ENCODE measurements at regions of chr6 and their contacts with region 1.

Region 1: DNA sequence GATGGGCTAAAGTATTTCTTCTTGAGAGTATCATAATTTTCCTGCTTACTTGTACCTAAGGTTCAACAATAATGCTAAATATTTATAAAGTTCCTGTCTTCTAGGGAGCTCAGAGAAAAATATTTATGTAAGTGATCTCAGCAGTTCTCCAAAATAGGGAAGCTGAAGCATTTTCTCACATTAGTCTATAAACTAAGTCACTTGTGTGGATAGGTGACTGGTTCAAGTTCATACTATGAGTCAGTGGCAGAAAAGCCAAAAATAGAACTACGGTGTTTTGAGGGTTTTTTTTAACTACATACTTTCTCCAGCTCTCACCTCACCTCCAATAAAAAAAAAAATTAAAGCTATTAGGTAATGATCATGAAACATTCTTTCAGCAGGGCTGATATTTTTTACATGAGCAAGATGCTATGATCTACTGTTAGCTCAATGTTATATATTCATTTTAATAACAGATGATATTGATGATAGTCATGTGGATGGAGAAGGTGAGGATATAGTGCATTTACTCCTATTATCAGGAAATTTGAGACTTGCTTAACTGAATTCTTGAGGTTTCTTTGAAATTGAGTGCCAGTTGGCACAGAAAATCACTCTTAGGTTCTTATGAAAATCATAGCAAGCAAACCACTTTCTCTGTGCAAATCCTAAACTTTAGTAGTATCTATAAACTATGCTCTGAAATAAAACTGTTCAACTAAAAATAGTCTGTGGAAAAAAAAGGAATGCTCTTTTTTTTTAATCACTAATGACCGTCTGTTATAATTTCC is 4.1 kb upstream of the MOXD1 start:
- DNase-seq: no peak
- ATAC-seq: no peak
- H3K4me3 Mint-ChIP-seq: no peak overlapping the region
- H3K27ac Mint-ChIP-seq: no peak overlapping the region
- H3K4me1 Mint-ChIP-seq: peaks cover 16% of the 10 kb centered on the region
- H3K27me3 Mint-ChIP-seq: peaks cover 37% of the 10 kb centered on the region
- CTCF ChIP-seq: no peak

Region 2: GRCh38 chr6:131886542-131886941 is 518.8 kb before region 1 on chr6:
- CTCF ChIA-PET with region 1: no interaction called
- POLR2A ChIA-PET with region 1: interaction called, 11 read pairs
- DNase-seq: no peak
- ATAC-seq: no peak
- H3K4me3 Mint-ChIP-seq: no peak overlapping the region
- H3K27ac Mint-ChIP-seq: no peak overlapping the region
- H3K4me1 Mint-ChIP-seq: no peaks in the 10 kb centered on the region
- H3K27me3 Mint-ChIP-seq: no peaks in the 10 kb centered on the region
- CTCF ChIP-seq: no peak

Region 3: GRCh38 chr6:132333639-132334520 is 71.4 kb before region 1 on chr6:
- CTCF ChIA-PET with region 1: no interaction called
- POLR2A ChIA-PET with region 1: no interaction called
- DNase-seq: no peak
- ATAC-seq: peak; percentile 38; the same call in 1 of the 2 replicates
- H3K4me3 Mint-ChIP-seq: no peak overlapping the region
- H3K27ac Mint-ChIP-seq: no peak overlapping the region
- H3K4me1 Mint-ChIP-seq: peaks cover 5% of the 10 kb centered on the region
- H3K27me3 Mint-ChIP-seq: no peaks in the 10 kb centered on the region
- CTCF ChIP-seq: no peak

Region 4: DNA sequence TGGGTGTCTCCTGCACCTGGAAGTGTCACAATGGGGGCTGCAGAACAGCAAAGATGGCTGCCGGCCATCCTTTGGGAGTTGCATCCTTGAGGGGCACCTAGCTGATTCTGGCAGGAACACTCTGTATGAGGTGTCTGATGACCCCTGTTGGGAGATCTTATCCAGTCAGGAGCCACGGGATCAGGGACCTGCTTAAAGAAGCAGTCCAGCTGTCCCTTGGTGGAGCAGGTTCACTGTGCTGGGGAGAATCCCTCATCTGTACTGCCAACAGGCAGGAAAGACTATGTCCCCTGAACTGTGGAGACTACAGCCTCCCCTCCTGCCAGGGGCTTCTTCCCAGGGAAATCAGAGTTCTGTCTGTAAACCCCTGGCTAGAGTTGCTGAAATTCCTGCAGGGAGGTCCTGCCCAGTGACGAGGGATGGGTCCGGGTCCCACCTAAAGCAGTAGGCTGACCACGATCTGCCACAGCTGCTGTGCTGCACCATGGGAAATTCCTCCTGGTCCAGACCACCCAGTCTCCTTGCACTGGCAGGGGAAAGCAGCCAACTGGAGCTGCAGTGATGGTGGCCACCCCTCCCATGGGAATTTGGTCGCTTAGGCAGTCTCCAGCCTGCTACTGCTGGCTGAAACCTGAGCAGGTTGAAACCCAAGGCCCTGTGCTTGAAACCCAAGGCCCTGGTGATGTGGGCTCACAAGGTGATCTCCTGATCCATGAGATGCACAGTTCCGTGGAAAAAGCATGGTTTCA is 19.7 kb after region 1 on chr6:
- CTCF ChIA-PET with region 1: no interaction called
- POLR2A ChIA-PET with region 1: no interaction called
- DNase-seq: peak; percentile 16
- ATAC-seq: no peak; the same call in 1 of the 2 replicates
- H3K4me3 Mint-ChIP-seq: no peak overlapping the region
- H3K27ac Mint-ChIP-seq: no peak overlapping the region
- H3K4me1 Mint-ChIP-seq: no peaks in the 10 kb centered on the region
- H3K27me3 Mint-ChIP-seq: no peaks in the 10 kb centered on the region; the same call in 1 of the 2 replicates
- CTCF ChIP-seq: no peak

Region 5: DNA sequence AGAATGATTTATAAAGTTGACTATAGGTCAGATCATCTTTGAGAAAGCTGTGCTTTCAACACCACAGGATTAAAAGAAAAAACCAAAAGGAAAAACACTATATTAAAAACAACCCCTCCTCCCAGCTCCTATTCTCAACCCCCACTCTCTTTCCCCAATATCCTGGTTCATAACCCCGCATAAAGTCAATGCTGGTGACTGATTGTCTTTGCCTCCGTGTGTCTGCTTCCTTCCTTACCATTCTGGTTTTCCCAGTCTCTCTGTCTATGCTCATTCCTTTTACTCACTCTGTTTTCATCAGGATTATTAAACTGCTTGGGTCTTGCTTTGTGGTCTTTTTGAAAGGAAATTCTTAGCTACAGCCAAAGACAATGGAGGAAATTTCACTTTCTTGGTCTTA is 445.0 kb after region 1 on chr6:
- CTCF ChIA-PET with region 1: no interaction called
- POLR2A ChIA-PET with region 1: no interaction called
- DNase-seq: no peak
- ATAC-seq: no peak
- H3K4me3 Mint-ChIP-seq: no peak overlapping the region
- H3K27ac Mint-ChIP-seq: no peak overlapping the region
- H3K4me1 Mint-ChIP-seq: 0 out of 2 replicates have a peak, but pooled peaks cover 3% of the 10 kb centered on the region
- H3K27me3 Mint-ChIP-seq: no peaks in the 10 kb centered on the region
- CTCF ChIP-seq: no peak